Activated CD4-positive, alpha-beta memory T cell treated with anti-CD3 and anti-CD28 coated beads, Interleukin-2, amount 10 ng/mL, durations not matched to agents 7 days and 5 days (primary cell): ENCODE measurements at regions of chr1 and their contacts with region 1.

Region 1: GRCh38 chr1:66288048-66288447 is 245.9 kb upstream of the SGIP1 start:
- DNase-seq: peak; percentile 23
- H3K4me3 Mint-ChIP-seq: no peak overlapping the region
- H3K27ac Mint-ChIP-seq: no peak overlapping the region
- H3K4me1 Mint-ChIP-seq: peaks cover 67% of the 10 kb centered on the region
- H3K27me3 Mint-ChIP-seq: peaks cover 2% of the 10 kb centered on the region

Region 2: DNA sequence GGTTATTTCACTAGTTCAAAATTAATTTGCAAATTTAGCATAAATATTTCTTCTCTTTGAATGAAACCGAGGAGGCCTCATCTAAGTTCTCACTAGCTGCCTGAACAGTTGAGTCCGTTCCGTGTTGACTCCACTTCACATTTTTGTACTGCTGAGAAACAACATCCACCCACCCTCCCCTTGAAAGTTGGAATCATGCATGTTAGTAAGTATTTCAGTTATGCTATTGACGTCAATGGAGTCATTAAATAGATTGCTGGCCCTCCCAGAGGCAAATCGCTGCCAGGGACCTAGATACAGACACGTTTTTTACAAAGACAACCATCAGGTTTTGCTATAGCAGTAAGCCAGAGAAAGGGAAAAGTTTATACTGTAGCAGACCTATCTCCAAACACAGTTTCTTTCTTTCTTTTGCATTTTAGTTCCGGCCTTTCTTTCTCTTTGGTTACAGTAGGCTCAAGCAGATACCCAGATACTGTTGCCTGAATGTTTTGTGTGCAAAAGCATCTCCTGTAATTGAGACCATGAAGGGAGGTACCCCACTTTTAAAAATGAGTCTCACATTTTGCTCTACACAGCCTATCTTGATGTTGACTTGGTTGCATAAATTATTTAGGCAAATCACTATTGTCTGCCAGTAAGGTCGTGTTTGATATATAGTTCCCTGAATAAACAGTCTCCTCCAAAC is 16.7 kb before region 1 on chr1:
- CTCF ChIA-PET with region 1: interaction called, 8 read pairs
- POLR2A ChIA-PET with region 1: interaction called, 12 read pairs
- DNase-seq: peak; percentile 34
- H3K4me3 Mint-ChIP-seq: no peak overlapping the region
- H3K27ac Mint-ChIP-seq: peak overlapping the region; percentile 57
- H3K4me1 Mint-ChIP-seq: peaks cover 61% of the 10 kb centered on the region
- H3K27me3 Mint-ChIP-seq: peaks cover 2% of the 10 kb centered on the region